Activated CD8-positive, alpha-beta T cell treated with anti-CD3 and anti-CD28 coated beads for 36 hours (primary cell): ENCODE measurements at regions of chr10 and their contacts with region 1.

Region 1: GRCh38 chr10:30986053-30986555 is 45.6 kb downstream of the ZNF438 start:
- DNase-seq: no peak
- ATAC-seq: peak; percentile 82
- H3K4me3 Mint-ChIP-seq: no peak overlapping the region
- H3K27ac Mint-ChIP-seq: no peak overlapping the region
- H3K4me1 Mint-ChIP-seq: peaks cover 7% of the 10 kb centered on the region
- H3K27me3 Mint-ChIP-seq: no peaks in the 10 kb centered on the region
- CTCF ChIP-seq: no peak

Region 2: DNA sequence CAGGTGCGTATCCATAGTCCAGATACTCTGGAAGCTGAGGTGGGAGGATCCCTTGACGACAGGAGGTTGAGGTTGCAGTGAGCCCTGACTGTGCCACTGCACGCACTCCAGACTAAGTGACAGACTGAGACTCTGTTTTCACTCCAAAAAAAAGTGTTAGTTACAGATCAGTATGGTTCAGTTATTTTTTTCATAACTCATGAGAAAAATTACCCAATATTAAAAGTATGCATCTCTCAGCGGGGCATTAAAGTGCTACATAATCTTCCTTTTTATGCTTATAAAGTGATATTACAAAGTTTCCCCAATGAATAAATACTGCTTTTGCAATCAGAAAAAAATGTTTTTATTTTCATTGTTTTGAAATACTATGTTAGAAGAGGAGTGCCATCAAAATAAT is 102.4 kb before region 1 on chr10:
- CTCF ChIA-PET with region 1: no interaction called
- POLR2A ChIA-PET with region 1: no interaction called
- intact Hi-C with region 1: no loop called
- DNase-seq: no peak
- ATAC-seq: no peak
- H3K4me3 Mint-ChIP-seq: no peak overlapping the region
- H3K27ac Mint-ChIP-seq: no peak overlapping the region
- H3K4me1 Mint-ChIP-seq: no peaks in the 10 kb centered on the region
- H3K27me3 Mint-ChIP-seq: no peaks in the 10 kb centered on the region
- CTCF ChIP-seq: no peak

Region 3: DNA sequence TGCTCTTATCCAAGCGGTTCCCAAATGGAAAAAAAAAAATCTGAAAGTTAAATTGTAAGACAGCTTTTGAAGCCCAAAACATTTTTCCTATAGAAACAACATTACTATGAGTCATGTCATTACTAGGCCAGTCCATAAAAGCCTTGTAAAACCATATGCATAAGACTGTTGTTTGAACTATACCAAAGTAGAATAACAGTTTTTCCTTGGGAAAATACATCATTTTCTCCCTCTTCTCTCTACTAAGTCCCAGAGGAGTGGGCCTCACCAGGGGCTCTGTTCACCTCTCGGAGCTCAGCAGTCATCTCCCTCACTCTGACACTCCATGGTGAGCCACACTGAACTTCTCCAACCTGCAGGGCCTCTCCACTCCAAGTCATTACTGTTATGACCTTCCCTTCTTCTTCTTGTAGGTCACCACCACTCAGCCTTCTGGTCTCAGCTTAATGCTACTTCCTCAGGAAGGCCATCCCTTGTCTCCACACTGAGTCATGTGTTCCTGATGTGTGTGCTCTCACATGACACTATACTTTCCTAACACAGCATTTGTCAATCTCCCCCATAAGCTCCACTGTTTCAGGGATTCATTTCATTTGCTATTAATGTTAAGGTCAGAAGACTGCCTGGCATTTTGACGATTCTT is 13.1 kb after region 1 on chr10:
- CTCF ChIA-PET with region 1: interaction called, 11 read pairs
- POLR2A ChIA-PET with region 1: interaction called, 3 read pairs
- intact Hi-C with region 1: no loop called
- DNase-seq: peak; percentile 10
- ATAC-seq: peak; percentile 55
- H3K4me3 Mint-ChIP-seq: peak overlapping the region; percentile 61
- H3K27ac Mint-ChIP-seq: peak overlapping the region; percentile 69
- H3K4me1 Mint-ChIP-seq: peaks cover 37% of the 10 kb centered on the region
- H3K27me3 Mint-ChIP-seq: no peaks in the 10 kb centered on the region
- CTCF ChIP-seq: no peak